ENCODE measurements at regions of chr1 and their contacts with region 1.

Region 1: DNA sequence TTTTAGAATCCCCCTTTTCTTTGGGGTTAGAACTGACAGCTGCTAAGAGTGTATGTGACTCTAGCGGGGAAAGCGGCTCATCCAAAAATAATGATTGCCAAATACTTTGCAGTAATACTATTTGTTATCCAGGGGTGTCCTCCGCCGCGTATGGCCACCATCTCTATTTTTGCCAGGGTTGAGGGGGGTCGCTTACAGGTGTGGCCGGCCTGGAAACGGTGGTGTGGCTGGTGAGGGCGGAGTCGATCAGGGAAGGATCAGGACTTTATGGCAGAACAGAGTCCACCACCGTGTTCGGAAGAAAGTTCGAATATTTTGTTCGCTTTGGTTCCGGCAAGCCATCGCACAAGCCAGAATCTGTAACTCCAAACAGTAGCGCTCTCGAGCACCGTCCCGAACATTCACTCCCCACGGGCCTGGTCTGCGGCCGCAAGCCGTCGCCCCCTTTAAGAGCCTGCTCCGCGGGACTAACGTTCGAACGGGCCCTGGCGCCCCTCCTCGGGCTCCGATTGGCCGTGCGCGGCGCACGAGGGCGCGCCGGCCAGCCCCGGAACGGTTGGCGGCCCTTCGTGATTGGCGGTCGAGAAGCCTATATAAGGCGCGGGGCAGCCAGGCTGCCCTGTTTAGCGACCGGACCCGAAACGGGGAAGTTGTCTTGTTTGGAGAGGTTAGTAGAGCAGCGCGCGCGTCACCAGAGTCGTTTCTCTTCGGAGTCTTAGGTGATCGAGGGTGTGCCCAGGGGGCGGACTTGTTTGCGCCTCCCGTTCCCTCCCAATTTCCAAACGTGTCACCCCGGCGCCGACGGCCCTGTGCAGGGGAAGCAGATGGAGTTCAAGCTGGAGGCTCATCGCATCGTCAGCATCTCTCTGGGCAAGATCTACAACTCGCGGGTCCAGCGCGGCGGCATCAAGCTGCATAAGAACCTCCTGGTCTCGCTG is at the start of gene IER5:
- DNase-seq: peak; percentile 97
- H3K4me3 ChIP-seq: peak within 1 kb of the TSS; percentile 87 to 93 (median 89)
- H3K27ac ChIP-seq: peak within 1 kb of the TSS; percentile 96
- H3K4me1 ChIP-seq: peaks cover 29% of the 10 kb centered on the region
- H3K27me3 ChIP-seq: no peaks in the 10 kb centered on the region
- CTCF ChIP-seq: no peak
- total RNA-seq, gene IER5: 16.3 to 37.5 TPM

Region 2: GRCh38 chr1:180631766-180632325 is 456.5 kb before region 1 on chr1 and contains the start of gene XPR1:
- CTCF ChIA-PET with region 1: no interaction called
- dilution Hi-C with region 1: no loop called
- in situ Hi-C with region 1: no loop called
- intact Hi-C with region 1: loop called (anchors 10 kb)
- DNase-seq: peak; percentile 97
- H3K4me3 ChIP-seq: peak within 1 kb of the TSS; percentile 83 to 99 (median 96)
- H3K27ac ChIP-seq: peak within 1 kb of the TSS; percentile 64
- H3K4me1 ChIP-seq: peaks cover 13% of the 10 kb centered on the region
- H3K27me3 ChIP-seq: no peaks in the 10 kb centered on the region
- CTCF ChIP-seq: peak; percentile 13 to 38
- total RNA-seq, gene XPR1: 44.1 to 109 TPM

Region 3: GRCh38 chr1:180888870-180889269 is 199.5 kb before region 1 on chr1:
- CTCF ChIA-PET with region 1: no interaction called
- dilution Hi-C with region 1: no loop called
- in situ Hi-C with region 1: no loop called
- intact Hi-C with region 1: no loop called
- DNase-seq: no peak
- H3K4me3 ChIP-seq: no peak overlapping the region
- H3K27ac ChIP-seq: no peak overlapping the region
- H3K4me1 ChIP-seq: no peaks in the 10 kb centered on the region
- H3K27me3 ChIP-seq: no peaks in the 10 kb centered on the region
- CTCF ChIP-seq: no peak

Region 4: GRCh38 chr1:181002582-181003172 is 85.7 kb before region 1 on chr1:
- CTCF ChIA-PET with region 1: no interaction called
- dilution Hi-C with region 1: loop called (anchors 5 kb)
- in situ Hi-C with region 1: no loop called
- intact Hi-C with region 1: no loop called
- DNase-seq: no peak
- H3K4me3 ChIP-seq: no peak overlapping the region
- H3K27ac ChIP-seq: no peak overlapping the region
- H3K4me1 ChIP-seq: no peaks in the 10 kb centered on the region
- H3K27me3 ChIP-seq: no peaks in the 10 kb centered on the region
- CTCF ChIP-seq: no peak

Region 5: DNA sequence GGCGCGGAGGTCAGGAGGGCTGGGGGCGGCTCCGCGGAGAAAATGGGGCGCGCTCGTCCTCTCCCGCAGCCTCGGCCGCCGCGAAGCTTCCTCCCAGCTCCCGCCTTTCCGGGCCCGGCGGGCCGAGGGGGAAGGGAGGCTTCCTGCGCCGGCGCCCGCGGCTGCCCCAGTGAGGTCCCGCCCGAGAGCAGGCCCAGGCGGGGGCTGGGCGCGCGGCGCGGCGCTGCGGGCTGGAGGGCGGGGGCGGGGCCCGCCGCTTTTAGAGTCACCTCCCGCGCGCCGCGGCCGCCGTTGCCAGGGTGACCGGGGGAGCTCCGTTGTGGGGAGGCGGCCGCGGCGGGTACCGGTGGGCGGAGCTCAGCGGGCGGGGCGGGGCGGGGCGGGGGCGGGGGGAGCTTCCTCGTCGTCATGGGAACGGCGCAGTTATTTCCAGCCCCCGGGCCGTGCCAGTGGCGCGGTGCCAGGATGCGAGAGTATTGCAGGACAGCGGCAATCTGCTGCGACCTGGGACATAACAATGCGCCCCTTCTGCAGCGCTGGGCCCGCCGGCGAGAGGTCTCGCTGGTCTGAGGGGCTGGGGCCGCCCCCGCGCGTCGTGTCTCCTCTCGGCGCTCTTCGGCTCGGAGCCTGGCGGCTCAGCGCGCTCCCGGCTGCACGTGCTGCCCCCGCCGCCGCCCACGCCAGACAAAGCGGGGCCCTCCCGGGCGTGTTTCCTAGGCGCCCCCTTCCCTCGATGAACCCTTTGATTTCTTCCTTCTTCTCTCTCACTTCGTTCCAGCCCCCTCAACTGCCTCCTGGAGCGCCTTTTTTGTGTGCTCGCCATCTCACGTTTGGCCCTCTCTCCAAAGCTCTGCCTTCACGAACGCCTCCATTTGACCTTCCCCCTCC is 17.0 kb after region 1 on chr1:
- CTCF ChIA-PET with region 1: no interaction called
- dilution Hi-C with region 1: no loop called
- in situ Hi-C with region 1: no loop called
- intact Hi-C with region 1: loop called (anchors 2 kb)
- DNase-seq: peak; percentile 85
- H3K4me3 ChIP-seq: peak overlapping the region; percentile 68 to 78 (median 69)
- H3K27ac ChIP-seq: peak overlapping the region; percentile 76
- H3K4me1 ChIP-seq: peaks cover 62% of the 10 kb centered on the region
- H3K27me3 ChIP-seq: no peaks in the 10 kb centered on the region
- CTCF ChIP-seq: no peak

Region 6: GRCh38 chr1:181134543-181135362 is 46.4 kb after region 1 on chr1:
- CTCF ChIA-PET with region 1: no interaction called
- dilution Hi-C with region 1: loop called (anchors 5 kb)
- in situ Hi-C with region 1: loop called in 1 of 2 experiments (anchors 5 kb)
- intact Hi-C with region 1: no loop called
- DNase-seq: peak; percentile 94
- H3K4me3 ChIP-seq: no peak overlapping the region
- H3K27ac ChIP-seq: peak overlapping the region; percentile 95
- H3K4me1 ChIP-seq: peaks cover 36% of the 10 kb centered on the region
- H3K27me3 ChIP-seq: no peaks in the 10 kb centered on the region
- CTCF ChIP-seq: no peak

Region 7: GRCh38 chr1:181166377-181167196 is 78.2 kb after region 1 on chr1:
- CTCF ChIA-PET with region 1: no interaction called
- dilution Hi-C with region 1: loop called (anchors 5 kb)
- in situ Hi-C with region 1: no loop called
- intact Hi-C with region 1: loop called (anchors 1 kb)
- DNase-seq: peak; percentile 66
- H3K4me3 ChIP-seq: no peak overlapping the region
- H3K27ac ChIP-seq: no peak overlapping the region
- H3K4me1 ChIP-seq: no peaks in the 10 kb centered on the region
- H3K27me3 ChIP-seq: no peaks in the 10 kb centered on the region
- CTCF ChIP-seq: peak; percentile 86 to 92

Region 8: GRCh38 chr1:181655761-181656160 is 567.4 kb after region 1 on chr1:
- CTCF ChIA-PET with region 1: no interaction called
- dilution Hi-C with region 1: no loop called
- in situ Hi-C with region 1: no loop called
- intact Hi-C with region 1: no loop called
- DNase-seq: peak; percentile 48
- H3K4me3 ChIP-seq: no peak overlapping the region
- H3K27ac ChIP-seq: no peak overlapping the region
- H3K4me1 ChIP-seq: peaks cover 6% of the 10 kb centered on the region
- H3K27me3 ChIP-seq: no peaks in the 10 kb centered on the region
- CTCF ChIP-seq: no peak

Measured in mammary epithelial cell (primary cell).